CD4-positive, alpha-beta T cell (primary cell): ENCODE measurements at regions of chr13 and their contacts with region 1.

Region 1: GRCh38 chr13:52968074-52968700 is 60.4 kb upstream of the OLFM4 start:
- DNase-seq: peak; percentile 23 to 75 (median 44)
- ATAC-seq: peak; percentile 76
- H3K4me3 ChIP-seq: no peak overlapping the region
- H3K4me3 Mint-ChIP-seq: no peak overlapping the region
- H3K27ac ChIP-seq: no peak overlapping the region
- H3K27ac Mint-ChIP-seq: no peak overlapping the region
- H3K4me1 ChIP-seq: no peaks in the 10 kb centered on the region
- H3K4me1 Mint-ChIP-seq: no peaks in the 10 kb centered on the region
- H3K27me3 ChIP-seq: peaks cover 2 to 4% of the 10 kb centered on the region in 2 experiments
- H3K27me3 Mint-ChIP-seq: peaks cover 29% of the 10 kb centered on the region
- CTCF ChIP-seq: peak; percentile 74

Region 2: DNA sequence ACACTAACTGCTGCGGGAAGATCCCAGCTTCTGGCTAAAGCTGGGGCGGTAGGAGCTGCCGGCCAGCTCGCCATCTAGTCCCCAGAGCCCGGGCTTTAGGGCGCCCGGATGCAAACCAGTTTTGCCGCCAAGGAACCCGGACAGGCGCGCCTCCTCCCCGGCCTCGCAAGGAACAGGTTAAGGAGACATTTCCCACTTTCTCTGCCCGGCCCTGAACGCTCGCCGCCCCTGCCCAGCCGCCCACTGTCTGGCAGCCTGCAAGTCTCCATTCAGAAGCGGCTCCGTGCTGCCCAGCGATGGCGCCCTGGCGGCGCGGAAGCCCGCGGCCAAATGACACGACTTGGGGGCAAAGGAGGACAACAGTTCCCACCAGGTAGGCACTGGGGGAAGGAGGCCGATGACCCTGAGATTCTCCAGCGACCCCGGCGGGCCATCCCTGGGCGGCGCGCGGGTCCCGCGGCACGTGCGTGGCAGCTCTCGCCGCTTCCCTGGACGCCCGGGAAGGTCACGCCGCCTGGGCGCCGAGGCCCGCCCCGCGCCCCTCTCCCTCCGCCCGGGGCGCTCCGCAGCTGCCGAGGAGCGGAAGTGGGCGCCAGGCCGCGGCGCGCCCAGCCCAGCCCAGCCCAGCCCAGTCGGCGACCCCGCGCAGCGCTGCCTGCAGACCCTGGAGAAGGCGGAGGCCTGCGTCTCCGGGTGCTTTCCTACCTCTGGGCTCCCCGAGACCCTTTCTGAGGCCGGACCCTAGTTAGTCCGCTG is 368.2 kb before region 1 on chr13:
- CTCF ChIA-PET with region 1: no interaction called
- POLR2A ChIA-PET with region 1: no interaction called
- intact Hi-C with region 1: loop called in 1 of 2 experiments (anchors 10 kb)
- DNase-seq: no peak
- ATAC-seq: no peak
- H3K4me3 ChIP-seq: peak overlapping the region; percentile 47
- H3K4me3 Mint-ChIP-seq: peak overlapping the region; percentile 84
- H3K27ac ChIP-seq: no peak overlapping the region
- H3K27ac Mint-ChIP-seq: no peak overlapping the region
- H3K4me1 ChIP-seq: peaks cover 8% of the 10 kb centered on the region
- H3K4me1 Mint-ChIP-seq: peaks cover 10% of the 10 kb centered on the region
- H3K27me3 ChIP-seq: peaks cover 19 to 26% of the 10 kb centered on the region in 2 experiments
- H3K27me3 Mint-ChIP-seq: peaks cover 54% of the 10 kb centered on the region
- CTCF ChIP-seq: no peak

Region 3: GRCh38 chr13:52827839-52828238 is 140.3 kb before region 1 on chr13:
- CTCF ChIA-PET with region 1: no interaction called
- POLR2A ChIA-PET with region 1: no interaction called
- intact Hi-C with region 1: no loop called
- DNase-seq: no peak
- ATAC-seq: no peak
- H3K4me3 ChIP-seq: no peak overlapping the region
- H3K4me3 Mint-ChIP-seq: no peak overlapping the region
- H3K27ac ChIP-seq: no peak overlapping the region
- H3K27ac Mint-ChIP-seq: no peak overlapping the region
- H3K4me1 ChIP-seq: no peaks in the 10 kb centered on the region
- H3K4me1 Mint-ChIP-seq: no peaks in the 10 kb centered on the region
- H3K27me3 ChIP-seq: no peaks in the 10 kb centered on the region
- H3K27me3 Mint-ChIP-seq: peaks cover 27% of the 10 kb centered on the region
- CTCF ChIP-seq: no peak

Region 4: DNA sequence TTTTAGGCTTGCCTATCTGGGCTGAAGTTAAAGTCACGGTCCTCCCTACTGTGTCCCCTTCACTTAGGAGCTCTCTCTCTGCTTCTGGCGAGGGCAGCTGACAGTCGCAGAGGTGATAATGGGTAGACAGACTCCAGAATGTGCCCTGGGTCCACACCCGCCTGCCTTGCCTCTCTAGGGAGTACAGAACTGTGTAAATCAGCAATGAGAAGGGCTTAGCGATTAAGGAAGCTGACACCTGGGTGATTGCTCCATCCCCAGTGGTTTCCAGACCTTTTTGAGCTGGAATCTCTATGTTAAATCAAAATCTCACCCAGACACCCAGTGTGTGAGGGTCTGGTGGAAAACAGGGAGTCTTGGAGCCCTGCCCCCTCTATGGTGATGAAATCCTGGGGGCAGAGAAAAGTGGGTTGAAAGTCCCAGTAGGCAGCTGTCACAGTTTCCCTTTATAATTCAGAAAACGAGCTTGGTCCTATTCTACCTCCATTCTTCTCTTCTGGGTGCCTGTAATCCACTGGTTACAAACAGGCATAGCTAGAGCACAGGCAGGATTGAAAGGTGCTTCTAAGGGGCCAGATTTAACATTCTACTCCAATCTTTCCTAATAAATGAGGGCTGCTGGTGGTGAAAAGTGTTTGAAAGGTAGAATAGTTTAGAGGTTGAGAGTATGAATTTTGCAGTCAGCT is 107.3 kb after region 1 on chr13:
- CTCF ChIA-PET with region 1: no interaction called
- POLR2A ChIA-PET with region 1: no interaction called
- intact Hi-C with region 1: no loop called
- DNase-seq: no peak
- ATAC-seq: no peak
- H3K4me3 ChIP-seq: no peak overlapping the region
- H3K4me3 Mint-ChIP-seq: no peak overlapping the region
- H3K27ac ChIP-seq: no peak overlapping the region
- H3K27ac Mint-ChIP-seq: no peak overlapping the region
- H3K4me1 ChIP-seq: no peaks in the 10 kb centered on the region
- H3K4me1 Mint-ChIP-seq: no peaks in the 10 kb centered on the region
- H3K27me3 ChIP-seq: no peaks in the 10 kb centered on the region
- H3K27me3 Mint-ChIP-seq: no peaks in the 10 kb centered on the region
- CTCF ChIP-seq: no peak